Esophagus muscularis mucosa (tissue), 4 donors: ENCODE measurements at regions of chr7 and their contacts with region 1.

Region 1: DNA sequence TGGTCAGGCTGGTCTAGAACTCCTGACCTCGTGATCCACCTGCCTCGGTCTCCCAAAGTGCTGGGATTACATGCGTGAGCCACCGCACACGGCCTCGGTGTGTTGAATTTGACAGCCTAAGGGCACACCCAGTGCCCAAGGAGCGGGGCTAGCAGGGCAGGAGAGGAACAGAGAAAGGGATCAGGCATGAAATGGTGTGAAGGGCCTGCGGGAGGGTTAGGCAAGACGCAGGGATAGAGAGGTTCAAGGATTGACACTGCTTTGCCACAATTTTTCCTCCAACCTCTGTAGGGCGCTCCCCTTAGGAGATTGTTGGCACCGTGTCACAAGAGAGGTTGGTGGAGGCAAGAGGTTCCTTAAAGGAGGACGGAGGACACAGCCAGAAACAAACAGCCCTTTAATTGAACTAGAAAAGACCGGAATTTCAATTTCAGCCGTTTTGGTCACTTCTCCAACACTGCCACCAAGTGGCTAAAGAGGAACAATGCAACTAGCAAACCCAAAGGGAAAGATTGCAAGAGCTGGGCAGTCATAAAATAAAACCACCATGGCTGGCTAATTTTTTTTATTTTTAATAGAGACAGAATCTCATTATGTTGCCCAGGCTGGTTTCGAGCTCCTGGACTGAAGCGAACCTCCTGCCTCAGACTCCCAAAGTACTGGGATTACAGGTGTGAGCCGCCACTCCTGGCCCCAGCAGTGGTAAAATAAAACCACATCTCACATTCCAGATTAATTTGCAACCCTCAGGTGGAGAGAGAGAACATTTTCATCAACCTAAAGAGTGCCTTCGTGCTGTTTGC is 6.9 kb upstream of the CREB3L2 start:
- DNase-seq: no peak
- H3K4me3 ChIP-seq: peak overlapping the region in 1 of 4 donors; percentile 21
- H3K27ac ChIP-seq: no peak overlapping the region
- H3K4me1 ChIP-seq: peaks cover 0 to 13% (median 8%) of the 10 kb centered on the region in 4 donors
- H3K27me3 ChIP-seq: no peaks in the 10 kb centered on the region
- CTCF ChIP-seq: peak; percentile 89 to 97 (median 94)
- EP300 ChIP-seq: no peak
- POLR2A ChIP-seq: no peak

Region 2: DNA sequence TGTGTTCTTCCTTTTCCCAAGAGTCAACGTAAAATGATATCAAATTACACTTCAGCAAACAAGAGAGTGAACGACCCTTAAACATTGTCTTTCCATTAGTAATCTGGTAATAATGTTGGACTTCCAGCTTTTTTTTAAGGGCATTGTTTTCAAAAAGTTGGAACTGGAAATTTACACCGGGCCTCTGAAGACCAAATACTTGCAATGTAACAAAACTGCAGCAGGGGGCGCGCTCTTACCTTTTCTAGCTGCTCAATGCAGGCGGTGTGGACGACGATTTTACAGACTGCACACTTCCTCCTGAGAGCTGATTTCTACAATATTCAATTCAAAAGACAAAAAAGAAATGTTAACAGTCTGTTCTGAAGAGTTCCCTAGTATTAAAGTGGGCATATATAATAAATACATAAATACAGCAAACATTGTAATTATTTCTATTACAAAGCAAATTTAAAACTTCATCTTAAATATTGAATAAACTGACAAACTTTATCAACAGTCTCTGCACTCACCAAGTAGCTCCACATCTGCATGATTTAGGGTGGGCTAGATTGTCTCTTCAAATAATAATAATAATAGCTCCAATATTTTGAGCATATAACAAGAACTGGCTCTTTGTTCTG is 352.4 kb before region 1 on chr7:
- intact Hi-C with region 1: loop called (anchors 2 kb)
- DNase-seq: no peak
- H3K4me3 ChIP-seq: no peak overlapping the region
- H3K27ac ChIP-seq: no peak overlapping the region
- H3K4me1 ChIP-seq: peaks cover 4 to 21% (median 9%) of the 10 kb centered on the region in 4 donors
- H3K27me3 ChIP-seq: no peaks in the 10 kb centered on the region
- CTCF ChIP-seq: peak; percentile 78 to 85 (median 84)
- EP300 ChIP-seq: no peak
- POLR2A ChIP-seq: no peak

Region 3: GRCh38 chr7:137873989-137874777 is 134.6 kb before region 1 on chr7:
- intact Hi-C with region 1: no loop called
- DNase-seq: no peak
- H3K4me3 ChIP-seq: no peak overlapping the region
- H3K27ac ChIP-seq: peak overlapping the region; percentile 39 to 50 (median 44)
- H3K4me1 ChIP-seq: peaks cover 41 to 67% (median 50%) of the 10 kb centered on the region in 4 donors
- H3K27me3 ChIP-seq: no peaks in the 10 kb centered on the region
- CTCF ChIP-seq: no peak
- EP300 ChIP-seq: no peak
- POLR2A ChIP-seq: no peak